Heart left ventricle (tissue), 16 donors: ENCODE measurements at regions of chr17 and their contacts with region 1.

Region 1: DNA sequence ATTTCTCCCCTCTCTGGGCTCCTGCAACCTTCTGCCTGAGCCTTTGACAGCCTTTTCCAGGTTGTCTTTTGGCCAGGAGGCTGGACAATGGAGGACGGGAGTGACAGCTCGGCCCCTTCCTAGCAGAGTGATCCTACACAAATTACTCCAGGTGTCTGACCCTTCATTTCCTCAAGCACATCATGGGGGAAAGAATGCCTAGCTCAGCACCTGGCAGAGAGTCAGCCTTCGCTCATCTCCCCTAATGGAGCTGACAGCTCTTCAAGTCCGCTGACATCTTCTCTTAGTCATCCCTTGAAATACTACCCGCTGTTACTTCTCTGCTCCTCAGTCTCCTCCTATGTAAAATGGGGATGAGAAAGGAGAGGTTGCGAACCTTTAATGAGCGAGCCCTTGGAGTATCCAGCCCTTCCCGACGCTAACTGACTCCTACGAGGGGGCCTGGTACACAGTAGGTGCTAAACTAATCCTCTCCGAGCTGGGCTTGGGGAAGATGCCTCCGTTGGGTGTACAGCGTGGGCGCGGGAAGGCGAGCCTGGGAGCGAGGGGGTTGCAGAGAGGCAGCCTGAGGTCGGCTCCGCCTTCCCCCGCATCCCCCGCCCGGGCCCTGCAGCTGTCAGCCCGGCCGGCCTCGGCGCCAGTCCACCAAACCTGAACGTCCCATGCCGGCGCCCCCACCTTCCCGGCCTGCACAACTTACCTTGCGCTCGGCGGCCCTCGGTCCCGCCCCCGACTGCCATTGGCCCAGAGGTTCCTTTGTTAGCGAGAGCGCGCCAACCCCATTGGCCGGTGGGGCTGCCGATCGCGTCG is 481 bp upstream of the MPRIP start:
- DNase-seq: peak; percentile 99 to 100 (median 99)
- ATAC-seq: peak; percentile 94 to 97 (median 96)
- H3K4me3 ChIP-seq: peak overlapping the region in 11 of 12 donors; percentile 17 to 85 (median 57)
- H3K27ac ChIP-seq: peak overlapping the region in 11 of 12 donors; percentile 62 to 88 (median 77)
- H3K4me1 ChIP-seq: peaks cover 11 to 56% (median 44%) of the 10 kb centered on the region in 12 donors
- H3K27me3 ChIP-seq: no peaks in the 10 kb centered on the region
- CTCF ChIP-seq: no peak
- POLR2A ChIP-seq: peak in 1 of 2 donors; percentile 46

Region 2: DNA sequence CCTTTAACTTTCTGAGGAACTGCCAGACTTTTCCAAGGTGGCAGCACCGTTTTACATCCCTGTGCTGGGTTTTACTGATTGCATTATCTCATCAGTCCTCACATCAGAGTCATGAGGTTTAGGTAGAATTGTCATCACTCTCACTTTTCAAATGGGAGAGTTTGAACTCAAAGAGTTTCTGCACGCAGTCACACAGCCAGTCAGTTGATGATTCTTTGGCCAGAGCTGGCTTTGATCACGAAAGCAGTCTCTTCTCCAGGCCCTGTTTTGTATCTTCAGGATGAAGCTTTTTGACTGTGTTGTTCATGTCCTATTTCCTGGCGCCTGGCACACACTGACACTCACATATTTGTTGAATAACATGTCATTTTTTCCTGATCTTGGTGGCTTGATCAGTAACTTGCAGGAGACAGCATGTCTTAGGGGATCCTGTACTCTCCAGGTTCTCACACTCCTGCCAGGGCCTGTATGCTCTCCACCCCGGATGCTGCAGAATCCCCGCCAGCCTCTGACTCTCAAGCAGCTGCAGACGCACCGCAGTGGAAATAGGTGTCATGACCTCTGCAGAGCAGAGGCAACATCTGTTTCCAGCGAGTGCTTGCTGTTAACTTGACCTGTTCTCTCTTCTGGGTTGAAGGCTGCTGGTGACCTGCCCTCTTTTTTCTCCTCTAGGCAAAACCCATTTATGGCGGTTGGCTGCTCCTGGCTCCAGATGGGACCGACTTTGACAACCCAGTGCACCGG is 33.4 kb after region 1 on chr17:
- intact Hi-C with region 1: loop called in 2 of 10 experiments (anchors 5 kb)
- DNase-seq: peak; percentile 61 to 74 (median 69)
- ATAC-seq: peak in 3 of 4 donors; percentile 23 to 66 (median 46)
- H3K4me3 ChIP-seq: no peak overlapping the region
- H3K27ac ChIP-seq: peak overlapping the region in 10 of 12 donors; percentile 2 to 53 (median 36)
- H3K4me1 ChIP-seq: peaks cover 23 to 100% (median 86%) of the 10 kb centered on the region in 12 donors
- H3K27me3 ChIP-seq: no peaks in the 10 kb centered on the region
- CTCF ChIP-seq: no peak
- POLR2A ChIP-seq: no peak

Region 3: DNA sequence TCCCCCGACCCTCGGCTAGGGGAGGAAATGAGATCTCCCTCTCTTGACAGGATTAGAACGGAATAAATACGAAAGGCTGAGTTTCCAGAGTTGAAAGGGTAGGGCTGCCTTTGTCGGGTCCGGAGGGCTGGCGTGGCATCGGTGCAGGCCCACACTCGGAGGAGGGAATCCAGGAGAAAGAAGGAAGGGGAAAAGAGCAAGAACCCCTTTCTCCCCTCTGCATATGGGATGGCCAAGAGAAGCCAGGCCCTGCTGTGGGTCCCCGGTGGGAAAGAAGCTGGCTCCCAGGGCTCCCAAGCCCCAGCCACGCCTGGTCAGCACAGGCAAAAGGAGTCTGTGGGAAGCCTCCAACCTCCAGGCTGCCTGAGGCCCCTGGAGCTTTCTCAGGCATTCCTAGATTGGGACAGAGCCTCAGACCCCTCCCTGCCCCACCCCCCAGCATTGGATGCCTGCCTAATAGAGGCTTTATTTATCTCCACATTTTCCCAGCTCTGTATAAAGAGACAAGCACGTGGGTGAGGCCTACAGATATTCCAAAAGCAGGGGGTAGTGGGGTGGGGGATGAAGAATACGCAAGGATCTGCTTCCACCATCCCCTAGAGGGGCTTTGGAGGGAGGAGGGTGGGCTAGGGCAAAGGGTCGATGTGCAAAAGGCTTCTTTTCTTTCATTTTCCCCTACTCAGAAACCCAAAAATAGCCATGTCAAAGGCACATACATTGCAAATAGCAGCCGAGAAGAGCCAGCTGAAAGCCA is 56.8 kb after region 1 on chr17:
- intact Hi-C with region 1: loop called in 5 of 10 experiments (anchors 5 to 10 kb)
- DNase-seq: peak; percentile 70 to 79 (median 76)
- ATAC-seq: peak; percentile 19 to 68 (median 50)
- H3K4me3 ChIP-seq: peak overlapping the region in 1 of 12 donors; percentile 19
- H3K27ac ChIP-seq: peak overlapping the region; percentile 29 to 85 (median 73)
- H3K4me1 ChIP-seq: peaks cover 20 to 100% (median 82%) of the 10 kb centered on the region in 12 donors
- H3K27me3 ChIP-seq: no peaks in the 10 kb centered on the region
- CTCF ChIP-seq: no peak
- POLR2A ChIP-seq: no peak

Region 4: DNA sequence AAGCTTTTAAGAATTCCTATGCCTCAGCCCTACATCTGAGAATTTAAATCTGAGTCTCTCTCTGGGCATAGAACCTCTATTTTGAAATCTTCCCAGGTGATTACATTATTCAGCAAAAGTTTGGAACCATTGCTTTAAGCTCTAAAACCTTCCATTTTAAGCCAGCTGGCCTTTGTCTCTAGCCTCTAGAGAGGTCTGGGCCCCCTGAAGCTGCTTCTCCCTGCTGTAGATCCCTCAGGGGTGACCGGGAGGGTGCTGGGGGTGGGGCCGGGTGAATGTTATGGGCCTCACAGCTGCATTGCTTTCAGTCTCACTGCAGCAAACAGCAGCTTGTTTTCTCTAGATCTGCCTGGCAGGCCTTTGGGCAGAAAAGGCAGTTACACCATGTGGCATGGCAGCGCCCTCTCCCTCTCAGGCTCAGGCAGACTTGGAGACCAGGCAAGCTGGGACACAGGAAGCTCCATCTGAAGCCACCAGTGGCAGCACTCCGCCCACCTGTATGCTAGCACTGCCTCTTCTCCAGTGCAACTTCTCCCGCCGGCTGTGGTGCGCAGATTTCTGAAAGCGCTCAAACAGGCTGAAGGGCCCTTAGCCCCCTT is 66.8 kb after region 1 on chr17:
- intact Hi-C with region 1: loop called in 4 of 10 experiments (anchors 5 kb)
- DNase-seq: no peak
- ATAC-seq: peak in 2 of 4 donors; percentile 21 to 27
- H3K4me3 ChIP-seq: no peak overlapping the region
- H3K27ac ChIP-seq: peak overlapping the region in 11 of 12 donors; percentile 56 to 83 (median 69)
- H3K4me1 ChIP-seq: peaks cover 30 to 100% (median 90%) of the 10 kb centered on the region in 12 donors
- H3K27me3 ChIP-seq: no peaks in the 10 kb centered on the region
- CTCF ChIP-seq: no peak
- POLR2A ChIP-seq: no peak